ENCODE measurements at regions of chr19 and their contacts with region 1.

Region 1: GRCh38 chr19:15264061-15264932 is 32.0 kb upstream of the EPHX3 start:
- DNase-seq: no peak
- H3K4me3 ChIP-seq: no peak overlapping the region
- H3K27ac ChIP-seq: peak overlapping the region in 3 of 4 donors; percentile 49 to 87 (median 75)
- H3K4me1 ChIP-seq: peaks cover 15 to 60% (median 35%) of the 10 kb centered on the region in 3 donors
- H3K27me3 ChIP-seq: no peaks in the 10 kb centered on the region
- CTCF ChIP-seq: peak; percentile 73 to 85 (median 82)
- POLR2A ChIP-seq: peak in 1 of 4 donors; percentile 14

Region 2: GRCh38 chr19:14916848-14917247 is 347.4 kb before region 1 on chr19:
- intact Hi-C with region 1: no loop called
- DNase-seq: no peak
- H3K4me3 ChIP-seq: no peak overlapping the region
- H3K27ac ChIP-seq: no peak overlapping the region
- H3K4me1 ChIP-seq: no peaks in the 10 kb centered on the region
- H3K27me3 ChIP-seq: peaks cover 0 to 18% (median 0%) of the 10 kb centered on the region in 4 donors
- CTCF ChIP-seq: no peak
- POLR2A ChIP-seq: no peak

Region 3: GRCh38 chr19:15048885-15049572 is 215.3 kb before region 1 on chr19 and contains the start of gene CASP14:
- intact Hi-C with region 1: no loop called
- DNase-seq: no peak
- H3K4me3 ChIP-seq: no peak within 1 kb of the TSS
- H3K27ac ChIP-seq: no peak within 1 kb of the TSS
- H3K4me1 ChIP-seq: peaks cover 0 to 8% (median 0%) of the 10 kb centered on the region in 3 donors
- H3K27me3 ChIP-seq: peaks cover 0 to 35% (median 0%) of the 10 kb centered on the region in 4 donors
- CTCF ChIP-seq: no peak
- POLR2A ChIP-seq: no peak
- total RNA-seq, gene CASP14: 0.42 to 0.44 TPM in 2 of 4 donors, not detected in the others

Region 4: DNA sequence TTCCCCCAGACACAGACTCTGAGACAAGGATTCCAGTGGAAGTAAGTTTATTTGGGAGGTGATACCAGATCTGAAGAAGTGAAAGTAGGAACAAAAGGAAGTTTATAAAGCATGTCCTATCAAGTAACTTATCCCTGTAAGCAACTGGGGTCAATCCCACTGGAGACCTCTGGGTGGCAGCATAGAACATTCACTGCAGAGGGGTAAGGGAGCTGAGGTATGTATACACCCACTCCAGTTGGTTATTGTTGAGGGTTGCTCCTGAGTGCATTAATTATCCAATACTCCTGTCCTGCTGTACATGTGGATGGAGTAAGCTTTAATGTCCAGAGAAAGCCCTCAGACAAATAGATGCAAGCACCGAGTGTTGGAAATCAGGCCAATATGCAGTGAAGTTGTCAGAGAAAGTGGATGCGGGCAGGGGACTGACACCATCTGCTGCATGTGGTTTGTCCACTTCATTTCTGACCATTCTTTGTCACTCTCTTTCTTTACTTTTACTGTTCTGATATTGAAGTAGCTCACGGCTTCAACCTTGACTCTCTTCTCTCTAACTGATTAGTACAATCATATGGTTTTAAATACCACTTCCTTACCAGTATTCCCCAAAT is 110.2 kb before region 1 on chr19:
- intact Hi-C with region 1: no loop called
- DNase-seq: no peak
- H3K4me3 ChIP-seq: no peak overlapping the region
- H3K27ac ChIP-seq: no peak overlapping the region
- H3K4me1 ChIP-seq: no peaks in the 10 kb centered on the region
- H3K27me3 ChIP-seq: peaks cover 0 to 4% (median 0%) of the 10 kb centered on the region in 4 donors
- CTCF ChIP-seq: peak; percentile 16 to 70 (median 43)
- POLR2A ChIP-seq: no peak

Region 5: DNA sequence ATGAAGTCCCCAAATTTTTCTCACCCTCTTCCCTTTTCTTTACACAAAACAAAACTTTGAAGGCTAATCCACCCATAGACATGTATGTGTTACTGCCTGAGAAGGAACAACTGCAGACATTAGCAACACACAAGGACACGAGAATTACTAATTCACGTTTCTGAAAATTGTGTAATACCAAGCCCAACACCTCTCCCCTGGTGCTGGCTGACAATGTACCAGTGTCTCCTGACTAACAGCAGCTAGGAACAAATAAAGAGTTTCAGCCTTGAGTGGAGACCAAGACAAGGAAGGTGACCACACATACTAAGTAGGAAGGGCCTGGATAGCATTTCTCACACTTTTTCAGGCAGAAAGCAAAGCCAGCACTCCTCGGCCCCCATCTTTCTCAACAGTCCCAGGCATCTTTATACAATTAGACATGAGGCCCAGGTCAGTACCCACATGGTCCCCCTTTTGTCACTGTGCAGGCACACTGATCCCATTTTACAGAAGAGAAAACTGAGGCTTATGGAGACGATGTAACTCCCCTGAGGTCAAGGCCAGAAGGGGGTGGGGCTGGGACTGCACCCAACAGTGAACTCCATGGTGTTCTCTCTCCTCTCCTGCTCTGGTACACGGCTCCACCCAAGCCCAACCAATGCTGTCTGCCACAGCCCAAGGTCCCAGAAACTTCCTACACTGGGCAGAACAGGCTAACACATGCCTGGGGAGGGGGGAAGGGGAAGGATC is 59.4 kb after region 1 on chr19:
- intact Hi-C with region 1: no loop called
- DNase-seq: no peak
- H3K4me3 ChIP-seq: peak overlapping the region in 1 of 4 donors; percentile 24
- H3K27ac ChIP-seq: peak overlapping the region; percentile 70 to 87 (median 79)
- H3K4me1 ChIP-seq: peaks cover 59 to 99% (median 87%) of the 10 kb centered on the region in 3 donors
- H3K27me3 ChIP-seq: no peaks in the 10 kb centered on the region
- CTCF ChIP-seq: no peak
- POLR2A ChIP-seq: no peak

Region 6: GRCh38 chr19:15379083-15379995 is 115.0 kb after region 1 on chr19 and contains the start of gene AKAP8:
- intact Hi-C with region 1: loop called (anchors 10 kb)
- DNase-seq: peak; percentile 88
- H3K4me3 ChIP-seq: peak within 1 kb of the TSS; percentile 74 to 100 (median 96)
- H3K27ac ChIP-seq: peak within 1 kb of the TSS; percentile 94 to 99 (median 97)
- H3K4me1 ChIP-seq: peaks cover 23 to 52% (median 45%) of the 10 kb centered on the region in 3 donors
- H3K27me3 ChIP-seq: no peaks in the 10 kb centered on the region
- CTCF ChIP-seq: no peak
- POLR2A ChIP-seq: peak in 3 of 4 donors; percentile 58 to 82 (median 71)
- total RNA-seq, gene AKAP8: 17.4 to 32.4 (median 21.7) TPM